Motor neuron (in vitro differentiated cells): ENCODE measurements at regions of chrX and their contacts with region 1.

Region 1: DNA sequence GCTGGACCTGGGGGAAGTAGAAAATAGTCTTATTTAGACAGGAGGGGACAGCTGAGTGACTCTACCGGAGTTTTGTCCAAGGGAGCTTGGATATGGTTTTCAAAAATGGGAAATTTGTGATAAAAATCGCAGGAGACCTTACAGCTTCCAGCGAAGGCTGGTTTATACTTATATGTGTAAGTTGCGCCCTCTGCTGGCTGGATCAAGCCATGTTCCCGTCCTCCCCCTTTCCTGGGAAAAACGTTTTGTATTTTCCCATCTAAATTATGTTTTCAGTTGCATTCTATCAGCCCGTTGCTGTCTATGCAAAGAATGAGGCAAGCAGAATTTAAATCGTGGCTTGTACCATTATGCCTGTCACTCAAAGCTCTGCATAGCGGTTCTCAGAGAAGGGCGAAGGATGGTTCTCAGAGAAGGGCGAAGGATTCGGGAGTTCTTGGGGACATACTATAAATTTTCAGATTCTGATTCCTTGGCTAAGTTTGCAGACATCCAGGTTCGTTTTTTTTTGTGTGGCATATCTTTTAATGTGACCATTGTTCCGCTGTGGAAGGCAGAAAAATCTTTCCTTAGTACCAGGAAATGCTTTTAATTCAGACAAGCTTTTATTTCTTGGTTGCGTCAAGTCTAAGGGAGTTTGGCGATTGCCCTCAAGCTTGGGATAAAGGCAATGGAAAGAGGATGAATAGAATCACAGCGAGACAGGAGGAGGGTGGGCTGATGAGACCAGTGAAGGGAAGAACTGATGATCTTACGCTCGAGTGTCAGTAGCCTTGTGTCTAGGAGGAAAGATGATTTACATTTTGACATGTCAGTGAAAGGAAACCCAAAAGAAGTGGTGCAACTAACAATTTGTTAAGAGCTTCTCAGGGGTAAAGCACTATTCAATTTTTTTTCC is 128.5 kb upstream of the ARX start:
- ATAC-seq: peak; percentile 52 to 75 (median 62)
- H3K4me3 ChIP-seq: peak overlapping the region; percentile 23 to 34 (median 25)
- H3K27ac ChIP-seq: no peak overlapping the region
- H3K4me1 ChIP-seq: peaks cover 0 to 2% of the 10 kb centered on the region in 2 donors

Region 2: GRCh38 chrX:24732766-24733500 is 411.4 kb before region 1 on chrX:
- in situ Hi-C with region 1: loop called in 1 of 9 experiments (anchors 25 kb)
- ATAC-seq: peak in 4 of 8 experiments; percentile 56 to 92 (median 89)
- H3K4me3 ChIP-seq: no peak overlapping the region
- H3K27ac ChIP-seq: no peak overlapping the region
- H3K4me1 ChIP-seq: no peaks in the 10 kb centered on the region

Region 3: GRCh38 chrX:24777660-24778059 is 366.6 kb before region 1 on chrX:
- in situ Hi-C with region 1: no loop called
- ATAC-seq: no peak
- H3K4me3 ChIP-seq: no peak overlapping the region
- H3K27ac ChIP-seq: no peak overlapping the region
- H3K4me1 ChIP-seq: no peaks in the 10 kb centered on the region

Region 4: GRCh38 chrX:24838629-24839028 is 305.7 kb before region 1 on chrX:
- in situ Hi-C with region 1: loop called in 1 of 9 experiments (anchors 10 kb)
- ATAC-seq: peak in 1 of 8 experiments; percentile 23
- H3K4me3 ChIP-seq: no peak overlapping the region
- H3K27ac ChIP-seq: no peak overlapping the region
- H3K4me1 ChIP-seq: no peaks in the 10 kb centered on the region

Region 5: DNA sequence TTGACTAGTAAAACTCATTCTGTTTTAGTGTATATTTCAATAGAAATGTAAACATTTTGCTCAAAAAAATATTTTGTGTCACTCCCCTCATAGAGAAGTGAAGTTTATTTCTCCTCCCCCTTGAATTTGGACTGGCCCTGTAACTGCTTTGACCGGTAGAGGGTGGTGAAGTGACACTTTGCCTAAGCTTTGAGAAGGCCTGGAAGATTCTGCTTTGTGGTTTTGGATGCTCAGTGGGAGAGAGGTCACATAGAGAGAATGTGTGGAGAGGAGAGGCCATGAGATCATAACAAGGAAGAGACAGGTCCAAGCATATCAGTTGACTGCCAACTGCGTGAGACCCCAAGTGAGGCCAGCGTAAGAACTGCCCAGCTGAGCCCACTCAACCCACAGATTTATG is 109.4 kb before region 1 on chrX:
- in situ Hi-C with region 1: loop called in 2 of 9 experiments (anchors 10 to 25 kb)
- ATAC-seq: peak in 3 of 8 experiments; percentile 25 to 77 (median 66)
- H3K4me3 ChIP-seq: no peak overlapping the region
- H3K27ac ChIP-seq: no peak overlapping the region
- H3K4me1 ChIP-seq: no peaks in the 10 kb centered on the region

Region 6: DNA sequence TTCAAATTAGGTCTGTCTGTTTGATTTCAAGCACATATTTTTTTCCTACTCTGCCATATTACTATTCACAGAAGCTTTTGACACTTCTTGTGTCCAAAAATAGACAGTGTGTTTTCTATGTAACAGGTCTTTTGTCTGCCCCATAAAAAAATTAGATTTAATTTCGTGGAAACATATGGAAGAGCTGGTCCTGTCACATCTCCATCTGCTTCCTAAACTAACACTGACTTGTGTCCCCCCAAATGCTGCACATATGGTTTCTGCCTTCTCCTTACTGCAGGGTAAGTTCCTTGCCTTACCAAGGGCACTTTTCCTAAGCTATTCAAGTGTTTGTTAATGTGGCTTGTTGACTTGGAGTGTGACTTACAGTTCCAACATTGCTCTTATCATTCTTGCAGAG is 212.2 kb after region 1 on chrX:
- in situ Hi-C with region 1: no loop called
- ATAC-seq: no peak
- H3K4me3 ChIP-seq: no peak overlapping the region
- H3K27ac ChIP-seq: no peak overlapping the region
- H3K4me1 ChIP-seq: no peaks in the 10 kb centered on the region